B cell (primary cell): ENCODE measurements at regions of chr12 and their contacts with region 1.

Region 1: DNA sequence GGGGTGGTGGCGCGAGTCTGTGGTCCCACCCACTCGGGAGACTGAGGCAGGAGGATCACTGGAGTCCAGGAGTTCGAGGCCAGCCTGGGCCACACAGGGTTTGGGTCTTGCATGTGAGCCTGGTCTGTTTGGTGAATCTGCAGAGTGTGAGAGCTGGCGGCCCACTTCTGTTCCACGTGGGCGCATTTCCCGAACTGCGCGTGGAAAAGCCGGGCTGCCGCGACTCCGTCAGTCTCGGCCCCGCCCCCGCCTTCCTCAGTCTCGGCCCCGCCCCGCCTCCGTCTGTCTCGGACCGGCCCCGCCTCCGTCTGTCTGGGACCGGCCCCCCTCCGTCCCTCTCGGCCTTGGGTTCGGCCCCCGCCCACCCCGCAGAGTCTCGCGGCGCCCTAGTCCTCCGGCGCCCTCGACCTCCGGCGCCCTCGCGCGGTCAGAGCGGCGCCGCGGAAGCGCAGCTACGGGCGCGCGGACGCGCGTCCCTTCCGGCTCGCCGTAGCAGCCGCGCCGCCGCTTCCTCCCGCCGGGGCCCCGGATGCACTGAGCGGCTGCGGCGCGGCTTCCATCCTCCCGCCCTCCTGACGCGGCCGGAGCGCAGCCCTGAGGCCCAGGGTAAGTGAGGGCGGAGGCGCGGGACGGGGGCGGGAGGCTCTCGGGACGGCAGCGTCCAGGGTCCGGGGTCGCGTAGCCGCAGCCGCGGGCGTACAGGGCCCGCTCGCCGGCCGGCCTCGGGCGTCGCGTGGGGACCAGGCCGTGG is at the start of gene EP400:
- DNase-seq: peak; percentile 96
- ATAC-seq: peak; percentile 97
- H3K4me3 ChIP-seq: peak within 1 kb of the TSS; percentile 50 to 89 (median 72)
- H3K4me3 Mint-ChIP-seq: peak within 1 kb of the TSS; percentile 92
- H3K27ac ChIP-seq: peak within 1 kb of the TSS; percentile 29 to 80
- H3K27ac Mint-ChIP-seq: peak within 1 kb of the TSS; percentile 90
- H3K4me1 ChIP-seq: peaks cover 8 to 26% of the 10 kb centered on the region in 2 donors
- H3K4me1 Mint-ChIP-seq: peaks cover 26% of the 10 kb centered on the region
- H3K27me3 ChIP-seq: no peaks in the 10 kb centered on the region
- H3K27me3 Mint-ChIP-seq: no peaks in the 10 kb centered on the region
- CTCF ChIP-seq: peak; percentile 65
- total RNA-seq, gene EP400: 82.2 and 88.1 TPM in 2 replicates

Region 2: DNA sequence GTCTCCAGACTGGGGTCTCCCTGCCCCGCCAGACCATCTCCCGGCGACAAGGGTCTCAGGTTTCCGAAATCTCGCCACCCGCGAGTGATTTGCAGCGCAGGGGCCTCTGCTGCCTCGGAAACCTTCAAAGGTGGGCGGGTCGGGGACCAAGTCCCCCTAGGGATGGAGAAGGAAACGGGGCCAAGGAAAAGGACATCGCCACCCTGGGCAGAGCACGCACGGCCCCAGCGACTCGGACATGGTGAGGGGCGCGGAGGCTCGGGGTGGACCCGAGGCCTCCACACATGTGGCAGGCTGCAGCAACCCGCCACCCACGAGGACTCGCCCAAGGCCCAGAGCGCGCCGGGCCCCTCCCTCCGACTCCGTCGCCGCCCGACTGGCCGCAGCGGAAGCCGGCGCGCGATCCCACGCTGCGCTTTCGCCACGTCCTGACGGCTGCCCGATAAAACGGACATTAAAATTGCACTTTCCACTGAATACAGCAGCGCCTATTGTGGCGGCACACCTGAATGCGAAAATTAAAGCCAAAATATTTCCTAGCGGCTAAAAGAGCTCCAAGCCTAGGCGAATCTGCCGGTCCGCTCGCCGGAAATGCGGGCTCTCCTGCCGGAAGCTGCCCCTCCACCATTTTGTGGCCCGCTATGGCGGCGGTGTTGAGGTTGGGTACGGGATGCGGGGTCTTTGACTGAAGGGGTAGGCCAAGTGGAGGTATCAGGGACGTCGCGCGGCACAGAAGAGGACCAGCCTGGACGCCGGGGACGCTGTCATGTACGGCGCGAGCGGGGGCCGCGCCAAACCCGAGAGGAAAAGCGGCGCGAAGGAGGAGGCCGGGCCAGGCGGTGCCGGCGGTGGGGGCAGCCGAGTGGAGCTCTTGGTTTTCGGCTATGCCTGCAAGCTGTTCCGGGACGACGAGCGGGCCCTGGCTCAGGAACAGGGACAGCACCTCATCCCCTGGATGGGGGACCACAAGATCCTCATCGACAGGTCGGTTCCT is 238.8 kb before region 1 on chr12 and contains the start of gene SFSWAP:
- CTCF ChIA-PET with region 1: no interaction called
- POLR2A ChIA-PET with region 1: no interaction called
- intact Hi-C with region 1: loop called (anchors 1 kb)
- DNase-seq: peak; percentile 92
- ATAC-seq: peak; percentile 95
- H3K4me3 ChIP-seq: peak within 1 kb of the TSS; percentile 83 to 100 (median 96)
- H3K4me3 Mint-ChIP-seq: peak within 1 kb of the TSS; percentile 98
- H3K27ac ChIP-seq: peak within 1 kb of the TSS; percentile 93 to 99
- H3K27ac Mint-ChIP-seq: peak within 1 kb of the TSS; percentile 99
- H3K4me1 ChIP-seq: peaks cover 16 to 22% of the 10 kb centered on the region in 2 donors
- H3K4me1 Mint-ChIP-seq: peaks cover 30% of the 10 kb centered on the region
- H3K27me3 ChIP-seq: no peaks in the 10 kb centered on the region
- H3K27me3 Mint-ChIP-seq: no peaks in the 10 kb centered on the region
- CTCF ChIP-seq: no peak
- total RNA-seq, gene SFSWAP: 122 and 135 TPM in 2 replicates

Region 3: GRCh38 chr12:131773582-131774221 is 175.9 kb before region 1 on chr12:
- CTCF ChIA-PET with region 1: interaction called, 3 read pairs
- POLR2A ChIA-PET with region 1: no interaction called
- intact Hi-C with region 1: loop called (anchors 5 kb)
- DNase-seq: peak; percentile 76
- ATAC-seq: peak; percentile 74
- H3K4me3 ChIP-seq: peak overlapping the region in 4 of 5 experiments; percentile 30 to 60 (median 50)
- H3K4me3 Mint-ChIP-seq: peak overlapping the region; percentile 91
- H3K27ac ChIP-seq: peak overlapping the region; percentile 93 to 97
- H3K27ac Mint-ChIP-seq: peak overlapping the region; percentile 97
- H3K4me1 ChIP-seq: peaks cover 62 to 68% of the 10 kb centered on the region in 2 donors
- H3K4me1 Mint-ChIP-seq: peaks cover 78% of the 10 kb centered on the region
- H3K27me3 ChIP-seq: no peaks in the 10 kb centered on the region
- H3K27me3 Mint-ChIP-seq: no peaks in the 10 kb centered on the region
- CTCF ChIP-seq: no peak

Region 4: GRCh38 chr12:131836193-131836592 is 113.4 kb before region 1 on chr12:
- CTCF ChIA-PET with region 1: interaction called, 8 read pairs
- POLR2A ChIA-PET with region 1: interaction called, 3 read pairs
- intact Hi-C with region 1: loop called (anchors 1 kb)
- DNase-seq: peak; percentile 15
- ATAC-seq: no peak
- H3K4me3 ChIP-seq: no peak overlapping the region
- H3K4me3 Mint-ChIP-seq: no peak overlapping the region
- H3K27ac ChIP-seq: no peak overlapping the region
- H3K27ac Mint-ChIP-seq: no peak overlapping the region
- H3K4me1 ChIP-seq: peaks cover 3 to 4% of the 10 kb centered on the region in 2 donors
- H3K4me1 Mint-ChIP-seq: peaks cover 7% of the 10 kb centered on the region
- H3K27me3 ChIP-seq: peaks cover 0 to 3% (median 0%) of the 10 kb centered on the region in 4 experiments
- H3K27me3 Mint-ChIP-seq: peaks cover 7% of the 10 kb centered on the region
- CTCF ChIP-seq: no peak

Region 5: GRCh38 chr12:131894313-131894860 is 55.2 kb before region 1 on chr12 and contains the start of gene ULK1:
- CTCF ChIA-PET with region 1: no interaction called
- POLR2A ChIA-PET with region 1: no interaction called
- intact Hi-C with region 1: loop called (anchors 1 kb)
- DNase-seq: peak; percentile 91
- ATAC-seq: peak; percentile 80
- H3K4me3 ChIP-seq: peak within 1 kb of the TSS; percentile 49 to 74 (median 59)
- H3K4me3 Mint-ChIP-seq: peak within 1 kb of the TSS; percentile 91
- H3K27ac ChIP-seq: peak within 1 kb of the TSS; percentile 6 to 69
- H3K27ac Mint-ChIP-seq: peak within 1 kb of the TSS; percentile 88
- H3K4me1 ChIP-seq: peaks cover 18 to 23% of the 10 kb centered on the region in 2 donors
- H3K4me1 Mint-ChIP-seq: peaks cover 21% of the 10 kb centered on the region
- H3K27me3 ChIP-seq: no peaks in the 10 kb centered on the region
- H3K27me3 Mint-ChIP-seq: peaks cover 4% of the 10 kb centered on the region
- CTCF ChIP-seq: no peak
- total RNA-seq, gene ULK1: 59.5 and 83.3 TPM in 2 replicates

Region 6: DNA sequence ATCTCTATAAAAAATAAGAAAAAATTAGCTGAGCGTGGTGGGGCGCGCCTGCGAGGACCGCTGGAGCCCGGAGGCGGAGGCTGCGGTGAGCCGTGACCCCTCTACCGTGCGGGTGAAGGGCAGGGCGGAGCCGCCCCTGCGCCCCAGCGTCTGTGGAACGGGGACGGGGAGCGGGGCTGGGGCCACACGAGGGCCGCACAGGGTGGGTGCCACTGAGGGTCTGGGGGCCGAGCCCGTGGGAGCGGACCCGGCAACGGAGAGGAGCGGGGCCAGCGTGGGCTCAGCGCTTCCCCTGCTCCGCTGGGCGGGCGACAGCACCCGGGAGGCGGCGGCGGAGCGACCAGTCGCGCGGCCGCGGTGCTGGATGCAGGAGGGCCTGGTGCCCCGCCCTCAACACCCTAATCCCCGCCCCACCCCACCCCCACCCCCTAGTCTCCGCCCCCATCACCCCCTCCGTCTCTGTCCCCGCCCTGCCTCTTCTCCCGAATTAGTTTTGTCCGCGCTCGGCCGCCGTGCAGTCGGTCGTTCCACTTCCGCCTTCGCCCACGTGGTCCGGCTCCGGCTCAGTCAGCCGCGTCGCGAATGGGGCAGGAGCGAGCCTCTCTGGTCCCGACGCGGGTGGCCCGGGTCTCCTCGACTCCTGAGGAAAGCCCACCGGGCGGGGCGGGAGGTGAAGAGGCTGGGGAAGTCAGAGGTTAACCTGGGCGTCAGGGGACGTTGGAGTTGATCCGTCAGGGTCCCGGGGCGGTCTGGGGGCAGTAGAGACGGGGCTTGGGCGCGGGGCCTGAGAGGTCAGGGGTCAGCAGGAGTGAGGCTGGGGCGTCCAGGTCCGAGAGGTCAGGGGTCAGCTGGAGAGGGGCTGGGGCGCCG is 20.7 kb before region 1 on chr12 and contains the start of gene PUS1:
- CTCF ChIA-PET with region 1: interaction called, 4 read pairs
- POLR2A ChIA-PET with region 1: interaction called, 5 read pairs
- intact Hi-C with region 1: loop called (anchors 1 kb)
- DNase-seq: peak; percentile 96
- ATAC-seq: peak; percentile 82
- H3K4me3 ChIP-seq: peak within 1 kb of the TSS; percentile 33 to 94 (median 86)
- H3K4me3 Mint-ChIP-seq: peak within 1 kb of the TSS; percentile 95
- H3K27ac ChIP-seq: peak within 1 kb of the TSS; percentile 55 to 85
- H3K27ac Mint-ChIP-seq: peak within 1 kb of the TSS; percentile 98
- H3K4me1 ChIP-seq: peaks cover 27 to 44% of the 10 kb centered on the region in 2 donors
- H3K4me1 Mint-ChIP-seq: peaks cover 33% of the 10 kb centered on the region
- H3K27me3 ChIP-seq: no peaks in the 10 kb centered on the region
- H3K27me3 Mint-ChIP-seq: no peaks in the 10 kb centered on the region
- CTCF ChIP-seq: no peak
- total RNA-seq, gene PUS1: 50.1 and 51.3 TPM in 2 replicates